AG04450 (cell line): ENCODE measurements at regions of chr11 and their contacts with region 1.

Region 1: DNA sequence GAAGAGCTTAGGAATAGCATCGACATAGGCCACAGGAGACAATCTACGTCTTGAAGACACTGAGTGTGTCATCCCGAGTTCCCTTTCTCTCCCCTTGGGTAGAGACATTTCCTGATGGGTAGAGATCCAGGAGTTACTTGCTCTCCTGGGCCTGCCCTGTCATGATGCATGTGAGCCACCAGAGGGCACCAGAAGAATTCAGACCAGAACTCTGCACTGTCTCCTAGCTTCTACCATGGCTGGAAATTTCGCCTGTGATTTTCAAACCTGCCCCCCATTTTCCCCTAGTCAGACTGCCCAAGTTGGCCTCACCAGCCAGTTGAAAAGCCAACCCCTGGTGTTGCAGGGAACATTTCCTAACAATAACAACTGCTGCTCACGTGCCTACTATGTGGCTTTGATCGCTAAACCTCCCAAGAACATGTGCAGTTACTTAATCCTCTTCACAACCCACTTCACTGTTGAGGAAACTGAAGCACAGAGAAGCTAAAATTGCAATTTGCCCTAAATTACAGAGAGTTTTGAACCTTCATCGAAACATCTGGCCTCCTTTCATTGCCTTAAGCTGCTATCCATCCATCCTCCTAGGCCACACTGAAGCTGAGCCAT is 47.2 kb downstream of the C11orf58 start:
- DNase-seq: peak; percentile 59
- H3K4me3 ChIP-seq: no peak overlapping the region
- H3K27ac ChIP-seq: no peak overlapping the region
- H3K27me3 ChIP-seq: peaks cover 2% of the 10 kb centered on the region
- CTCF ChIP-seq: peak; percentile 94

Region 2: DNA sequence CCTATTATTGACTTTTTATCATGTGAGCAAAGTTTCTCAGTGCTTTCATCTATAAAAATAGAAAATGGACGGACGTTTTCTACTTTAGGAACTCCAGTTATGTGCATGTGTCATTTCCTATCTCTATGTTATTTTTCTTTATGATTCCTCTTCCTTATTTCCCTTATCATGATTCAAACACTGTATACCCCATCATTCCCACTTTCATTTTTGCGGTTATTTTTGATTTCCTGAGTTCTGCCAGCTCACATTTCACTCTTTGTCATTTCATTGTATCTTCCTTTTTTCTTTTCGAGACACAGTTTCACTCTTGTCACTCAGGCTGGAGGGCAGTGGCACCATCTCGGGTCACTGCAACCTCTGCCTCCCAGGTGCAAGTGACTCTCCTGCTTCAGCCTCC is 25.8 kb before region 1 on chr11:
- CTCF ChIA-PET with region 1: interaction called, 13 read pairs
- POLR2A ChIA-PET with region 1: no interaction called
- DNase-seq: no peak
- H3K4me3 ChIP-seq: no peak overlapping the region
- H3K27ac ChIP-seq: no peak overlapping the region
- H3K27me3 ChIP-seq: no peaks in the 10 kb centered on the region
- CTCF ChIP-seq: no peak

Region 3: GRCh38 chr11:16801288-16801980 is 15.8 kb after region 1 on chr11:
- CTCF ChIA-PET with region 1: interaction called, 15 read pairs
- POLR2A ChIA-PET with region 1: no interaction called
- DNase-seq: no peak
- H3K4me3 ChIP-seq: no peak overlapping the region
- H3K27ac ChIP-seq: no peak overlapping the region
- H3K27me3 ChIP-seq: peaks cover 9% of the 10 kb centered on the region
- CTCF ChIP-seq: no peak

Region 4: GRCh38 chr11:16815043-16815767 is 29.6 kb after region 1 on chr11:
- CTCF ChIA-PET with region 1: interaction called, 37 read pairs
- POLR2A ChIA-PET with region 1: no interaction called
- DNase-seq: no peak
- H3K4me3 ChIP-seq: peak overlapping the region; percentile 31; the same call in 1 of the 2 replicates
- H3K27ac ChIP-seq: no peak overlapping the region
- H3K27me3 ChIP-seq: peaks cover 42% of the 10 kb centered on the region
- CTCF ChIP-seq: no peak

Region 5: DNA sequence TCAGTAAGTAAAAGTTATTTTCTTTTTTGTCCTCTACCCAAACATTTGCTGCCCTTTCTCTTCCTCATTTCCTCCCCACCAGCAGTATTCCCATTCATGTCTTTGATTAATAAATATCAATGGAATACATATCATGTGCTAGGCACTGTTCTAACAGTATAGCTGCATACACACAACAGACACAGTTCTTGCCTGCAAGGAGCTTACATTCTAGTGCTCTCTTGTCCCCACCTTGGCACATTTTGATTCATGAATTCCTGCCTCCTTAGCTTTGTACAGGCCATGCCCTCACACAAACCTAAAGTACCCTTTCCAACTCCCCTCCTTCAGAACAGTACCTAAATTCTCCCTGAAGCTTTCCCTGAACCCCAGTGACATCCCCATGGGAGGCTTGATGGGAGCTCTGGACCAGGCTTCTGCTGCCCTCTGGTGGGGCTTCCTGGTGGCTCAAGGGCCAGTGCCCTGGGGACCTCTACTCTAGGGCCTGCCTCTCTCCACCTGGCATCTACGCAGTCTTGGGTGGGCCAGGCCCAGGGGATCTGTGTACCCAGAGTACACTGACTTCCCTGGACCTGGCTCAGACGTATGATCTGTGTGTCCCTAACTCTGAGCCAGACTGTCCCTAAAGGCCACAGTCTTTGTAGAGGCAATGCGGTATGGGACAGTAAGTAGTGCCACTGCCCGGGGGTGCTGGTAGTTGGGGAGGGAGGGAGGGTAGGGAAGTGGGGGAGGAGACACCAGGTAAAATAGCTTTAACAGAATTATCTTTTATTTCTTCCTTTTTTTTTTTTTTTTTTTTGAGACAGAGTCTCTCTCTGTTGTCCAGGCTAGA is 277.8 kb after region 1 on chr11:
- CTCF ChIA-PET with region 1: interaction called, 105 read pairs
- POLR2A ChIA-PET with region 1: no interaction called
- DNase-seq: no peak
- H3K4me3 ChIP-seq: no peak overlapping the region
- H3K27ac ChIP-seq: no peak overlapping the region
- H3K27me3 ChIP-seq: no peaks in the 10 kb centered on the region
- CTCF ChIP-seq: peak; percentile 77